RWPE1 (cell line): ENCODE measurements at regions of chr10 and their contacts with region 1.

Region 1: DNA sequence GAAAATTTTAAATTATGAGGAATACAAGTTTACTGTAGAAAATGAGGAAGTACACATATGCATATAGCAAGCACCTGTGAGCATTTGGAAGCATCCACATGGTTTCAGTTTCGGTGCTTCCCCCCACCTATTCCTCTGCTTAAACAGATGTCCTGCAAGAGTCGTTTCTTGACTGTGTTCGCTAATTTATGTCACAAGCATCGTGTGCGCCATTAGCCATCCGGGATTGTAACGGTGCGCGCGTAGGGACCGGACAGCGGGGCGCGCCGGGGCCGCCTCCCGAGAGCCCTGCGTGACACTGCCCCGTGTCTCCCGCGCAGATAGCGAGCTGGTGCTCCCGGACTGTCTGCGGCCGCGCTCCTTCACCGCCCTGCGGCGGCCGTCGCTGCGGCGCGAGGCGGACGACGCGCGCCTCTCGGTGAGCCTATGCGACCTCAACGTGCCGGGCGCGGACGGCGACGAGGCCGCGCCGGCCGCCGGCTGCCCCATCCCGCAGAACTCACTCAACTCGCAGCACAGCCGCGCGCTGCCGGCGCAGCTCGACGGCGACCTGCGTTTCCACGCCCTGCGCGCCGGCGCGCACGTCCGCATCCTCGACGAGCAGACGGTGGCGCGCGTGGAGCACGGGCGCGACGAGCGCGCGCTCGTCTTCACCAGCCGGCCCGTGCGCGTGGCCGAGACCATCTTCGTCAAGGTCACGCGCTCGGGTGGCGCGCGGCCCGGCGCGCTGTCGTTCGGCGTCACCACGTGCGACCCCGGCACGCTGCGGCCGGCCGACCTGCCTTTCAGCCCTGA is 90.9 kb downstream of the NEURL1 start:
- DNase-seq: peak; percentile 82
- H3K27ac ChIP-seq: peak overlapping the region; percentile 17; the same call in 1 of the 2 replicates
- CTCF ChIP-seq: no peak

Region 2: GRCh38 chr10:103517234-103518085 is 67.0 kb before region 1 on chr10:
- CTCF ChIA-PET with region 1: no interaction called
- POLR2A ChIA-PET with region 1: no interaction called
- DNase-seq: no peak
- H3K27ac ChIP-seq: no peak overlapping the region
- CTCF ChIP-seq: no peak

Region 3: GRCh38 chr10:103560886-103561285 is 23.5 kb before region 1 on chr10:
- CTCF ChIA-PET with region 1: no interaction called
- POLR2A ChIA-PET with region 1: interaction called, 11 read pairs
- DNase-seq: no peak
- H3K27ac ChIP-seq: no peak overlapping the region
- CTCF ChIP-seq: no peak

Region 4: GRCh38 chr10:103572347-103573204 is 11.8 kb before region 1 on chr10:
- CTCF ChIA-PET with region 1: no interaction called
- POLR2A ChIA-PET with region 1: no interaction called
- DNase-seq: no peak
- H3K27ac ChIP-seq: no peak overlapping the region
- CTCF ChIP-seq: no peak

Region 5: GRCh38 chr10:103778358-103779139 is 194.1 kb after region 1 on chr10:
- CTCF ChIA-PET with region 1: no interaction called
- POLR2A ChIA-PET with region 1: interaction called, 11 read pairs
- DNase-seq: no peak
- H3K27ac ChIP-seq: peak overlapping the region; percentile 91
- CTCF ChIP-seq: no peak